Activated naive CD8-positive, alpha-beta T cell treated with anti-CD3 and anti-CD28 coated beads, Interleukin-2, amount 10 ng/mL, durations not matched to agents 7 days and 5 days (primary cell): ENCODE measurements at regions of chr6 and their contacts with region 1.

Region 1: DNA sequence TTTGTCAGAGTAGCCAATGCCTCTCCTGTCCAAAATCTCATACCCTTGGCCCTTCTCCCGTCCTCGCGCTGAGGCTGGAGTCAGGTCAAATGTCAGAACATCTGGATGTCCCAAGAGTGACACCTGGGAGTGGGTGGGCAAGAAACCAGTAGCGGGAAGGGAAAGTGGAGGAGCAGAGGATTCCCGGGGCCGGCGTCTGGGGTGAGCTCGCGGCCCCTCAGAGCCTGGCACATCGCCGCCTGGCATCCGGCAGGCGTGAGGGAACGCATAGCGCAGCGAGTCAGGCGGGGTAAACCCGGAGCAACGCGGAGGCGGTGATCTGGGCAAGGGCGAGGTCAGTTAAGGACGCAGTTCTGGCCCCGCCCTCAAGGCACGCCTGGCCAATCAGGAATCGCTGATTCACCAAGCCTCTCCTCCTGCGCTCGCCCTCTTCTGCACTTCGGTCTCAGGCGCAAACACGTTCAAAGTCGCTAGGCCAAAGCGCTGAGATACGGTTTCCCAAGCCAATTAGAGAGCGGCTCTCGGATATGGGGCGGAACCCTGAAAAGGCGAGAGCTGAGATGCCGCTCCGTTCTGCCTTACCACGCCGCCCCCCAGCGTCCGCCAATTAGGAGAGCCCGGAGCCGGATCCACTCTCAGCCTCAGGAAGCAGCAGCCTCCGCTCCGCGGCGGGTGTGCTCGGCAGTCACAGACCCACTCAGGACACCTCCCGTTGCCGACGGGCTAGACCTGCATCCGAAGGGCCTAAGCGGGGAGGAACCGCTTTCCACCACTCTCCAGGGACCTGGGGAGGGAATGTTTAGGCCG is 22.5 kb downstream of the VPS52 start:
- DNase-seq: peak; percentile 92
- ATAC-seq: peak; percentile 94
- H3K4me3 Mint-ChIP-seq: peak overlapping the region; percentile 87
- H3K27ac Mint-ChIP-seq: peak overlapping the region; percentile 91
- H3K4me1 Mint-ChIP-seq: peaks cover 26% of the 10 kb centered on the region
- H3K27me3 Mint-ChIP-seq: peaks cover 6% of the 10 kb centered on the region

Region 2: GRCh38 chr6:33204378-33205190 is 44.5 kb before region 1 on chr6 and contains the start of gene HSD17B8:
- POLR2A ChIA-PET with region 1: interaction called, 26 read pairs
- DNase-seq: peak; percentile 91
- ATAC-seq: peak; percentile 65
- H3K4me3 Mint-ChIP-seq: peak within 1 kb of the TSS; percentile 97
- H3K27ac Mint-ChIP-seq: peak within 1 kb of the TSS; percentile 93
- H3K4me1 Mint-ChIP-seq: peaks cover 44% of the 10 kb centered on the region
- H3K27me3 Mint-ChIP-seq: no peaks in the 10 kb centered on the region
- total RNA-seq, gene HSD17B8: 21.1 to 21.8 TPM

Region 3: DNA sequence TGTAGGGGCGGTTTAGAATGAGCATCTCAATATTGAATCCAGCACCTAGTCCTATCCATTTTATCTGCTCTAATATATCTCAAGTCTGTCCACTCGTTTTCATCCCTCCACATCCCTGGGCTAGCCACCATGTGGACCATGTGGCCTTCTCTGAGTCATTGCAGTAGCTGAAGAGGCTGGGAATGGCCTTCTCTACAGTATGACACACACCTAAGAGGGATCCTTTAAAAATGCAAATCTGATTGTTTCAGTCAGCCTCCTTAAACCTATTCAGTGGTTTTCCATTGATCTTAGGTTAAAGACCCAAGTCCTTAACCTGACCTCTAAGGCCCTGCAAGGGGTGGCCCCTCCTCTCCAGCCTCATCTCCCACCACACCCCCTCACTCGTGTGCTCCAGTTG is 31.4 kb before region 1 on chr6:
- POLR2A ChIA-PET with region 1: no interaction called
- DNase-seq: no peak
- ATAC-seq: no peak
- H3K4me3 Mint-ChIP-seq: no peak overlapping the region
- H3K27ac Mint-ChIP-seq: no peak overlapping the region
- H3K4me1 Mint-ChIP-seq: peaks cover 26% of the 10 kb centered on the region
- H3K27me3 Mint-ChIP-seq: peaks cover 28% of the 10 kb centered on the region